SK-N-SH (cell line): ENCODE measurements at regions of chr7 and their contacts with region 1.

Region 1: DNA sequence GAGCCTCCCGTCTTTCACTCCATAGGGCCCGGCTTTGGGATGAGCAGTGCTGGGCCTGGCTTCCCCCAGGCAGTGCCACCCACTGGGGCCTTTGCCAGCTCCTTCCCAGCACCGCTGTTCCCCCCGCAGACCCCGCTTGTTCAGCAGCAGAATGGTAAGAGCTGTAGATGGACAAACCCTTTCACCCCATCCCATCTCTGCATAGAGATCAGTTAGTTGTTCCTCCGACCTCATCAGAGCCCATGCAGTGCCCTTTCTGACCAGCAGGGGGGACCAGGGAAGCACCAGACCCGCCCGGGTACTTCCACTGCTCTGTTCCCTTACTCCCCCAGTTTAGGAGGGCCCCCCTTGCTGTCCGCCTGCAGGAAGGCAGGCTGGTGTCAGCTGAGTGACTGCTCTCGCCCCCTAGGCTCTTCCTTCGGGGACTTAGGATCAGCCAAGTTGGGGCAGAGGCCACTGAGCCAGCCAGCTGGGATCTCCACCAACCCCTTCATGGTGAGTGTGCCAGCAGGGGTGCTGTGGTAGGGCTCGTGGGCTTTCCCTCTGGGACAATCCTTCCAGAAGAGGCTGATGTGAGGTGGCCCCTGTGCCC is 9.8 kb downstream of the SAP25 start:
- DNase-seq: peak; percentile 95
- H3K4me3 ChIP-seq: no peak overlapping the region; a peak in 1 of 4 replicates
- H3K27ac ChIP-seq: no peak overlapping the region; a peak in 1 of 4 replicates
- H3K4me1 ChIP-seq: peaks cover 0 to 24% of the 10 kb centered on the region in 2 experiments; a peak in 1 of 4 replicates
- H3K27me3 ChIP-seq: no peaks in the 10 kb centered on the region
- CTCF ChIP-seq: peak; percentile 98
- EP300 ChIP-seq: no peak
- RAD21 ChIP-seq: peak; percentile 84

Region 2: GRCh38 chr7:100538654-100539435 is 25.1 kb before region 1 on chr7 and contains the start of gene AGFG2:
- CTCF ChIA-PET with region 1: interaction called, 353 read pairs
- POLR2A ChIA-PET with region 1: no interaction called
- DNase-seq: peak; percentile 100
- H3K4me3 ChIP-seq: peak within 1 kb of the TSS; percentile 69 to 92
- H3K27ac ChIP-seq: peak within 1 kb of the TSS in 1 of 2 experiments; percentile 63; a peak in 2 of 4 replicates
- H3K4me1 ChIP-seq: peaks cover 0 to 11% of the 10 kb centered on the region in 2 experiments; a peak in 2 of 4 replicates
- H3K27me3 ChIP-seq: no peaks in the 10 kb centered on the region
- CTCF ChIP-seq: no peak
- EP300 ChIP-seq: 0 out of 4 replicates have a peak, but pooled peaks of 1 of the 2 experiments have one; percentile 10
- RAD21 ChIP-seq: no peak
- polyA plus RNA-seq, gene AGFG2: 16.1 and 23.1 TPM in 2 replicates

Region 3: GRCh38 chr7:100586266-100587025 is 22.5 kb after region 1 on chr7 and contains the start of gene FBXO24:
- CTCF ChIA-PET with region 1: interaction called, 149 read pairs
- POLR2A ChIA-PET with region 1: interaction called, 5 read pairs
- DNase-seq: peak; percentile 100
- H3K4me3 ChIP-seq: peak within 1 kb of the TSS; percentile 83 to 92
- H3K27ac ChIP-seq: peak within 1 kb of the TSS; percentile 77 to 94
- H3K4me1 ChIP-seq: peaks cover 6 to 15% of the 10 kb centered on the region in 2 experiments; a peak in 2 of 4 replicates
- H3K27me3 ChIP-seq: no peaks in the 10 kb centered on the region
- CTCF ChIP-seq: no peak
- EP300 ChIP-seq: no peak; a peak in 1 of 4 replicates
- RAD21 ChIP-seq: no peak
- polyA plus RNA-seq, gene FBXO24: 0.71 and 0.94 TPM in 2 replicates

Region 4: DNA sequence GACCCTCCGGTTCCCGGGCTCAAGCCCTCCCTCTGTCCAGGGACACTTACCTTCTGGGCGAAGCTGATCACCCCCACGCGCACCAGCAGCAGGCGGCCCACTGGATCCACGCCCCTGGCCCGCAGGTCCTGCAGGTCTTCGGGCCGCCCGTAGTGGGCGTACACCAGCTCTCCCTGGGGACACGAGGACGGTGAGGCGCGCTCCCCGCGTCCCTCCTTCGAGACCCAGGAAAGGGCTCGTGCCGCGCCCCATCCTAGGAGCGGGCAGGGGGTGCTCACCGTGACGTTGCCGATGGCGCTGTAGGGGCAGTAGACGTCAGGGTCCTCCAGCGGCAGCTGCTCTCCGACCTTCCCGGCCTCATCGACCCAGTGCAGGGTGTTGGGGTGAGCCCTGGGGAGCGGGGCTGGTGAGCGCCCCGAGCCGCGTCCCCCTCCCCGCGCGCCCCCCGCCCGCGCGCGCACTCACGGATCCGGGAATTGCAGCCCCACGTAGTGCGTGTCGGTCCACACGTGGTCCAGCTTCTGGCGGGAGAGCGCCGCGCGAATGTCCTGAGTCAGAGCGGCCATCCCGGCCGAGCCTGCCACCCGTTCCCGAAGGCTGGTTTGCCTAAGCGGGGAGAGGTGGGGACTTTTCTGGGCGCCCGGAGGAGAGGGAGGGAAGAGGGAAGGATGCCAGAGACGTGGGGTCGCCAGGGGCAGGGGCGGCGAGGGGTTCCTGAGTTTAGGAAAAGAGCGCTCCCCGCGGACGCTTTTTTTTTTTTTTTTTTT is 69.2 kb after region 1 on chr7:
- CTCF ChIA-PET with region 1: interaction called, 25 read pairs
- POLR2A ChIA-PET with region 1: no interaction called
- DNase-seq: peak; percentile 95
- H3K4me3 ChIP-seq: peak overlapping the region; percentile 43 to 59
- H3K27ac ChIP-seq: no peak overlapping the region
- H3K4me1 ChIP-seq: peaks cover 6% of the 10 kb centered on the region in 2 experiments; a peak in 1 of 4 replicates
- H3K27me3 ChIP-seq: no peaks in the 10 kb centered on the region
- CTCF ChIP-seq: peak; percentile 53
- EP300 ChIP-seq: no peak
- RAD21 ChIP-seq: peak; percentile 46

Region 5: GRCh38 chr7:100726996-100727761 is 163.3 kb after region 1 on chr7:
- CTCF ChIA-PET with region 1: interaction called, 34 read pairs
- POLR2A ChIA-PET with region 1: no interaction called
- DNase-seq: no peak
- H3K4me3 ChIP-seq: no peak overlapping the region
- H3K27ac ChIP-seq: no peak overlapping the region
- H3K4me1 ChIP-seq: no peaks in the 10 kb centered on the region; a peak in 1 of 4 replicates
- H3K27me3 ChIP-seq: peaks cover 4% of the 10 kb centered on the region; the same call in 1 of the 2 replicates
- CTCF ChIP-seq: no peak
- EP300 ChIP-seq: no peak
- RAD21 ChIP-seq: no peak